ENCODE measurements at regions of chr10 and their contacts with region 1.

Region 1: GRCh38 chr10:88473989-88474883 is 108.9 kb downstream of the RNLS start:
- DNase-seq: peak; percentile 97
- H3K4me3 ChIP-seq: no peak overlapping the region
- H3K27ac ChIP-seq: peak overlapping the region; percentile 87
- H3K4me1 ChIP-seq: peaks cover 51% of the 10 kb centered on the region
- H3K27me3 ChIP-seq: no peaks in the 10 kb centered on the region
- CTCF ChIP-seq: no peak

Region 2: GRCh38 chr10:88546462-88546861 is 72.2 kb after region 1 on chr10:
- CTCF ChIA-PET with region 1: no interaction called
- dilution Hi-C with region 1: no loop called
- in situ Hi-C with region 1: loop called in 1 of 2 experiments (anchors 5 kb)
- intact Hi-C with region 1: loop called (anchors 5 kb)
- DNase-seq: no peak
- H3K4me3 ChIP-seq: no peak overlapping the region
- H3K27ac ChIP-seq: no peak overlapping the region
- H3K4me1 ChIP-seq: no peaks in the 10 kb centered on the region
- H3K27me3 ChIP-seq: no peaks in the 10 kb centered on the region
- CTCF ChIP-seq: no peak

Region 3: GRCh38 chr10:88651101-88651551 is 176.9 kb after region 1 on chr10:
- CTCF ChIA-PET with region 1: no interaction called
- dilution Hi-C with region 1: no loop called
- in situ Hi-C with region 1: no loop called
- intact Hi-C with region 1: no loop called
- DNase-seq: peak; percentile 77
- H3K4me3 ChIP-seq: no peak overlapping the region
- H3K27ac ChIP-seq: peak overlapping the region; percentile 54
- H3K4me1 ChIP-seq: peaks cover 13% of the 10 kb centered on the region
- H3K27me3 ChIP-seq: no peaks in the 10 kb centered on the region
- CTCF ChIP-seq: no peak

Region 4: GRCh38 chr10:88661577-88661976 is 187.3 kb after region 1 on chr10:
- CTCF ChIA-PET with region 1: no interaction called
- dilution Hi-C with region 1: no loop called
- in situ Hi-C with region 1: no loop called
- intact Hi-C with region 1: no loop called
- DNase-seq: no peak
- H3K4me3 ChIP-seq: no peak overlapping the region
- H3K27ac ChIP-seq: no peak overlapping the region
- H3K4me1 ChIP-seq: peaks cover 10% of the 10 kb centered on the region
- H3K27me3 ChIP-seq: no peaks in the 10 kb centered on the region
- CTCF ChIP-seq: no peak